Activated CD8-positive, alpha-beta T cell treated with anti-CD3 and anti-CD28 coated beads, Interleukin-2, amount 10 ng/mL, durations not matched to agents 7 days and 5 days (primary cell): ENCODE measurements at regions of chr20 and their contacts with region 1.

Region 1: DNA sequence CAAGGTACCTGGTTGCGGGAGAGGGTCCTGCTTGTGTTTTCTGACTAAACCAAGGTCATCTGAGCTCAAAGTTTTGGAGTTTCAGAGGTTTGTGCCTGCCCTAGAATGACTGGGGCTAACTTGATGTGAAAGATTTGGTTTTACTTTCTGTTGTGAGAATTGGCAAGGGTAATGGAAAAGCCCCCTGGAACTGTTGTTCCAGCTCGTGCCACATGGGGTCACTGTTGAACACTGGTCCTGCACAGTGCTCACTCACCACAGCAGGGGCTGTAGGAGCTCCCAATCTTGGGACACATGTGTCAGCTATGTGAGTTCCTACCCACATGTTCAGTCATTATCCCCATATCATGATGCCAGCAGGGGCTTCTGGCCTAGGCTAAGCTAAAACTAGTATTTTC is 6.5 kb downstream of the TGM6 start:
- DNase-seq: peak; percentile 74
- ATAC-seq: peak; percentile 83
- H3K4me3 Mint-ChIP-seq: no peak overlapping the region
- H3K27ac Mint-ChIP-seq: no peak overlapping the region
- H3K4me1 Mint-ChIP-seq: peaks cover 16% of the 10 kb centered on the region
- H3K27me3 Mint-ChIP-seq: peaks cover 25% of the 10 kb centered on the region

Region 2: DNA sequence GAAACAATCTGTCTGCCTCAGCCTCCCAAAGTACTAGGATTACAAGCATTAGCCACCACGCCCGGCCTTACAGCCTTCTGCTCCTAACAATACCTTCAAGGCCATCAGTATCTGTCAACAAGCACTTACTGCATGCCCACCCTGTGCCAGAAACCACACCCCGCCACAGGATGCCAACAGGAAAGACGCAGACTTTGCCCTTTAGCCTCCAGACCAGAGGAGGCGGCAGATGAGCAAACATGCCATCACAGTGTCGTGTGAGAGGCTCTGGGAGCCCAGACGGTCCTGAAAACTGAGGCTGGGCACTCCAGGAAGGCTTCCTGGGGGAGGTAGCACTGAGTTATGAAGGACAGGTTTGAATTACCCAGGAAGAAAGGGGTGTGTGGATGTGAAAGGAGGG is 126.1 kb before region 1 on chr20:
- CTCF ChIA-PET with region 1: no interaction called
- POLR2A ChIA-PET with region 1: no interaction called
- DNase-seq: no peak
- ATAC-seq: no peak
- H3K4me3 Mint-ChIP-seq: no peak overlapping the region
- H3K27ac Mint-ChIP-seq: no peak overlapping the region
- H3K4me1 Mint-ChIP-seq: peaks cover 4% of the 10 kb centered on the region
- H3K27me3 Mint-ChIP-seq: peaks cover 8% of the 10 kb centered on the region

Region 3: DNA sequence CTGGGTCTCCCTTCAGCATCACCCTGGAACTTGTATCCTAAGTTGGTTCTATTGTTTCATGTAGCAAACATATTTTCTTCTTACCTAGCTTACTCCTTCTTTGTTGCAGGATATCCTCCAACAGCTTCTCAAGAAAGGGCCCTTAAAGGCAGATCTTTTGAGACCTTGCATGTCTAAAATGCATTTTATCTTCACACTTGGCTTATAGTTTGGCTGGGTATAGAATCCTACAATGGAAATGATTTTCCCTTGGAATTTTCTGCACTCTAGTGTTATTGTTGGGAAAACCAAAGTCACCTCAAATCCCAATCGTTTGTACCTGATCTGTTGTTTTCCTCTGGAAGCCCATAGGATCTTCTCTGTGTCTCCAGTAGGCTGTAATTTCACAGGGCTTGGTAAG is 18.6 kb before region 1 on chr20:
- CTCF ChIA-PET with region 1: interaction called, 13 read pairs
- POLR2A ChIA-PET with region 1: no interaction called
- DNase-seq: no peak
- ATAC-seq: no peak
- H3K4me3 Mint-ChIP-seq: no peak overlapping the region
- H3K27ac Mint-ChIP-seq: no peak overlapping the region
- H3K4me1 Mint-ChIP-seq: no peaks in the 10 kb centered on the region
- H3K27me3 Mint-ChIP-seq: peaks cover 44% of the 10 kb centered on the region

Region 4: GRCh38 chr20:2402271-2402980 is 15.2 kb after region 1 on chr20:
- CTCF ChIA-PET with region 1: interaction called, 12 read pairs
- POLR2A ChIA-PET with region 1: no interaction called
- DNase-seq: no peak
- ATAC-seq: no peak
- H3K4me3 Mint-ChIP-seq: no peak overlapping the region
- H3K27ac Mint-ChIP-seq: no peak overlapping the region
- H3K4me1 Mint-ChIP-seq: no peaks in the 10 kb centered on the region
- H3K27me3 Mint-ChIP-seq: no peaks in the 10 kb centered on the region

Region 5: GRCh38 chr20:2446845-2447244 is 59.7 kb after region 1 on chr20:
- CTCF ChIA-PET with region 1: interaction called, 21 read pairs
- POLR2A ChIA-PET with region 1: no interaction called
- DNase-seq: no peak
- ATAC-seq: no peak
- H3K4me3 Mint-ChIP-seq: no peak overlapping the region
- H3K27ac Mint-ChIP-seq: no peak overlapping the region
- H3K4me1 Mint-ChIP-seq: peaks cover 3% of the 10 kb centered on the region
- H3K27me3 Mint-ChIP-seq: peaks cover 8% of the 10 kb centered on the region

Region 6: GRCh38 chr20:2451939-2452732 is 65.0 kb after region 1 on chr20:
- CTCF ChIA-PET with region 1: interaction called, 21 read pairs
- POLR2A ChIA-PET with region 1: no interaction called
- DNase-seq: peak; percentile 81
- ATAC-seq: peak; percentile 55
- H3K4me3 Mint-ChIP-seq: no peak overlapping the region
- H3K27ac Mint-ChIP-seq: no peak overlapping the region
- H3K4me1 Mint-ChIP-seq: peaks cover 3% of the 10 kb centered on the region
- H3K27me3 Mint-ChIP-seq: peaks cover 8% of the 10 kb centered on the region